Endothelial cell of umbilical vein (primary cell): ENCODE measurements at regions of chr4 and their contacts with region 1.

Region 1: GRCh38 chr4:15956179-15956850 is 6.7 kb downstream of the FGFBP2 start:
- DNase-seq: peak; percentile 69
- H3K4me3 ChIP-seq: no peak overlapping the region
- H3K27ac ChIP-seq: no peak overlapping the region
- H3K4me1 ChIP-seq: no peaks in the 10 kb centered on the region
- H3K27me3 ChIP-seq: no peaks in the 10 kb centered on the region
- CTCF ChIP-seq: peak; percentile 75 to 84
- POLR2A ChIP-seq: no peak

Region 2: GRCh38 chr4:15469402-15470127 is 486.8 kb before region 1 on chr4 and contains the start of gene CC2D2A:
- CTCF ChIA-PET with region 1: interaction called, 16 read pairs
- POLR2A ChIA-PET with region 1: no interaction called
- dilution Hi-C with region 1: no loop called
- intact Hi-C with region 1: no loop called
- DNase-seq: peak; percentile 67
- H3K4me3 ChIP-seq: peak within 1 kb of the TSS; percentile 44 to 83 (median 51)
- H3K27ac ChIP-seq: no peak within 1 kb of the TSS
- H3K4me1 ChIP-seq: peaks cover 3% of the 10 kb centered on the region
- H3K27me3 ChIP-seq: peaks cover 2 to 10% of the 10 kb centered on the region in 2 experiments
- CTCF ChIP-seq: no peak
- POLR2A ChIP-seq: no peak
- total RNA-seq, gene CC2D2A: 13.2 and 22.4 TPM in 2 replicates

Region 3: DNA sequence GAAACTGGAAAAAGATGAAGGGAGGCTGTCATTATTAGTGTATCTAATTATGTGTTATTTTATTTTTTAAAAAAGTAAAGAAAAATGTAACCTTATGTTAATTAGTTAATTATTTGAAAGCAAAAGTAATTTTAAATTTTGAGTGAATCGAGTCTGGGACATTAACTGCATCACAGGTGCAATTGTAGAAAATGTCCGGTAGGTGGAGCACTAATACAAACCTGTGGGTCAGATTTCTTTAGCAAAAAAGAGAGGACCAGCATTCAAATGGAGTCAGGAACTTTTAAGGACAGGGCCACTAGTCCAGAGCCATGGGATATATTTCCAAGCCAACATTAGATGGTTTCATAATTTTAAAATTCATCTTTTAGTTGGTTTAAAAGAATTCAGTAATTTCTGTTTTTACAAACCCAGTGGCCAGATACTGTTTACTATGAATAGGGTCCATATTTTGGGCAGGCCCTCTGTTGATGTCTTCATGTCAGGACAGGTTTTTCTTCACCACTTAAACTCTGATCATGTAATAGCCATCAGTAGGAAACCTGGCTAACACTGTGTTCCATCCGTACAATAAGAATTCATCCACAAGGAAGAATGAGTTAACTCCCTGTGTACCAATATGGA is 226.3 kb before region 1 on chr4:
- CTCF ChIA-PET with region 1: interaction called, 18 read pairs
- POLR2A ChIA-PET with region 1: no interaction called
- dilution Hi-C with region 1: no loop called
- intact Hi-C with region 1: loop called (anchors 1 kb)
- DNase-seq: peak; percentile 41
- H3K4me3 ChIP-seq: no peak overlapping the region
- H3K27ac ChIP-seq: no peak overlapping the region
- H3K4me1 ChIP-seq: no peaks in the 10 kb centered on the region
- H3K27me3 ChIP-seq: no peaks in the 10 kb centered on the region
- CTCF ChIP-seq: peak; percentile 61 to 65
- POLR2A ChIP-seq: no peak

Region 4: DNA sequence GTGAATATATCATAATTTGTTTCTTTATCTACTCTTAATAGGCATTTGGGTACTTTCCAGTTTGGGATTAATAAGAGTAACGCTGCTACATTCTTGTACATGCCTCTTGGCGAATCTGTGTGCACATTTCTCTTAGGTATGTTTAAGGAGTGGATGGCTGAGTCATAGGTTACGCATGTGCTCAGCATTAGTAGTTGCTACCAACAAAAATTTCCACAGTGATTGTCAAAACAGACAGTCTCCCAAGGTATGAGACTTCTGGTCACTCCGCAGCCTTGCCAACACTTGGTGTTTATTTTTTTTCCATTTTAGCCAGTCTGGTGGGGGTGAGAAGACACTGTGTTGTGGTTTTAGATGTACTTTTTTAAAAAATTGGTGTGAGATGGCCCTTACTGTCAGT is 62.4 kb before region 1 on chr4:
- CTCF ChIA-PET with region 1: interaction called, 44 read pairs
- POLR2A ChIA-PET with region 1: no interaction called
- dilution Hi-C with region 1: no loop called
- intact Hi-C with region 1: no loop called
- DNase-seq: no peak
- H3K4me3 ChIP-seq: no peak overlapping the region
- H3K27ac ChIP-seq: no peak overlapping the region
- H3K4me1 ChIP-seq: no peaks in the 10 kb centered on the region
- H3K27me3 ChIP-seq: peaks cover 9 to 19% of the 10 kb centered on the region in 2 experiments
- CTCF ChIP-seq: no peak
- POLR2A ChIP-seq: no peak

Region 5: DNA sequence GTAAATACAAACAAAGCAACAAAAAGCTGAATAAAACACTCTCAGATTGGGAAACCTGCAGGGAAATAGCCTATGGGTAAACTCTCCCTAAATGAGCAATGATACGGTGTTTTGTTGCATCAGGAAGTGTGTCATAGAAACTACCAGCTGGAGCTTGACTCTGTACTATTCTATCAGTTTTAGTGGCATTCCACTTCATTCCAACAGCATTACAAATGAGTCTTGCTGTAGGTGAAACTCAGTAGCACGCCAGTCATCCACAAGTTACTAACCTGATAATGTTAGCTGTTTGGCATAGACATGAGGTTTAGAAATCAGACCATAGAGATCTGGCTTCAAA is 42.7 kb before region 1 on chr4:
- CTCF ChIA-PET with region 1: interaction called, 17 read pairs
- POLR2A ChIA-PET with region 1: no interaction called
- dilution Hi-C with region 1: no loop called
- intact Hi-C with region 1: loop called (anchors 1 kb)
- DNase-seq: peak; percentile 72
- H3K4me3 ChIP-seq: no peak overlapping the region
- H3K27ac ChIP-seq: peak overlapping the region; percentile 24
- H3K4me1 ChIP-seq: peaks cover 10% of the 10 kb centered on the region
- H3K27me3 ChIP-seq: no peaks in the 10 kb centered on the region
- CTCF ChIP-seq: no peak
- POLR2A ChIP-seq: no peak

Region 6: GRCh38 chr4:15920723-15921591 is 35.4 kb before region 1 on chr4:
- CTCF ChIA-PET with region 1: interaction called, 7 read pairs
- POLR2A ChIA-PET with region 1: no interaction called
- dilution Hi-C with region 1: no loop called
- intact Hi-C with region 1: loop called (anchors 2 kb)
- DNase-seq: peak; percentile 89
- H3K4me3 ChIP-seq: no peak overlapping the region
- H3K27ac ChIP-seq: peak overlapping the region; percentile 24
- H3K4me1 ChIP-seq: peaks cover 11% of the 10 kb centered on the region
- H3K27me3 ChIP-seq: no peaks in the 10 kb centered on the region
- CTCF ChIP-seq: no peak
- POLR2A ChIP-seq: no peak